Activated CD4-positive, alpha-beta T cell treated with anti-CD3 and anti-CD28 coated beads, Interleukin-2, amount 10 ng/mL, durations not matched to agents 24 days and 14 days (primary cell): ENCODE measurements at regions of chr2 and their contacts with region 1.

Region 1: GRCh38 chr2:38626326-38627035 is 23.8 kb upstream of the HNRNPLL start:
- DNase-seq: peak; percentile 81
- H3K4me3 Mint-ChIP-seq: peak overlapping the region; percentile 7
- H3K27ac Mint-ChIP-seq: peak overlapping the region; percentile 1
- H3K4me1 Mint-ChIP-seq: peaks cover 24% of the 10 kb centered on the region
- H3K27me3 Mint-ChIP-seq: no peaks in the 10 kb centered on the region

Region 2: GRCh38 chr2:38336619-38337018 is 289.9 kb before region 1 on chr2:
- intact Hi-C with region 1: no loop called
- DNase-seq: no peak
- H3K4me3 Mint-ChIP-seq: no peak overlapping the region
- H3K27ac Mint-ChIP-seq: no peak overlapping the region
- H3K4me1 Mint-ChIP-seq: peaks cover 1% of the 10 kb centered on the region
- H3K27me3 Mint-ChIP-seq: no peaks in the 10 kb centered on the region

Region 3: GRCh38 chr2:38610851-38611801 is 15.4 kb before region 1 on chr2:
- intact Hi-C with region 1: loop called (anchors 2 kb)
- DNase-seq: no peak
- H3K4me3 Mint-ChIP-seq: no peak overlapping the region
- H3K27ac Mint-ChIP-seq: no peak overlapping the region
- H3K4me1 Mint-ChIP-seq: peaks cover 42% of the 10 kb centered on the region
- H3K27me3 Mint-ChIP-seq: no peaks in the 10 kb centered on the region

Region 4: DNA sequence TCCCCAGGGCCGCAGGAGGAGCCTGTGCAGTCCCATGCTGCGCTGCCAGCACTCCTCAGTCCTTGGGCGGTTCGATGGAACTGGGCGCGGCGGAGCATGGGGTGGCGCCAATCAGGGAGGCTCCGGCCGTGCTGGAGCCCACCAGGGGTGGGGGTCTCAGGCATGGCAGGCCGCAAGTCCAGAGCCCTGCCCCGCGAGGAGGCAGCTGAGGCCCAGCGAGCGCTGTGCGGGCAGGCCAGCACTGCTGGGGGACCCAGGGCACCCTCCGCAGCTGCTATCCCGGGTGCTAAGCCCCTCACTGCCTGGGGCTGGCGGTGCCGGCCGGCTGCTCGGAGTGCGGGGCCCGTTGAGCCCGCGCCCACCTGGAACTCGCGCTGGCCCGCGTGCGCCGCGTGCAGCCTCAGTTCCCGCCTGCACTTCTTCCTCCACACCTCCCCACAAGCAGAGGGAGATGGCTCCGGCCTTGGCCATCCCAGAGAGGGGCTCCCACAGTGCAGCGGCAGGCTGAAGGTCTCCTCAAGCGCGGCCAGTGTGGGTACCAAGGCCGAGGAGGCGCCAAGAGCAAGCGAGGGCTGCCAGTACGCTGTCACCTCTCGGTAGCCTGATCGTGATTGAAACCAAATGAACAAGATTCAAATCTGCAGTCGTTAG is 16.7 kb after region 1 on chr2:
- intact Hi-C with region 1: loop called (anchors 2 kb)
- DNase-seq: no peak
- H3K4me3 Mint-ChIP-seq: peak overlapping the region; percentile 71
- H3K27ac Mint-ChIP-seq: peak overlapping the region; percentile 90
- H3K4me1 Mint-ChIP-seq: peaks cover 34% of the 10 kb centered on the region
- H3K27me3 Mint-ChIP-seq: no peaks in the 10 kb centered on the region

Region 5: DNA sequence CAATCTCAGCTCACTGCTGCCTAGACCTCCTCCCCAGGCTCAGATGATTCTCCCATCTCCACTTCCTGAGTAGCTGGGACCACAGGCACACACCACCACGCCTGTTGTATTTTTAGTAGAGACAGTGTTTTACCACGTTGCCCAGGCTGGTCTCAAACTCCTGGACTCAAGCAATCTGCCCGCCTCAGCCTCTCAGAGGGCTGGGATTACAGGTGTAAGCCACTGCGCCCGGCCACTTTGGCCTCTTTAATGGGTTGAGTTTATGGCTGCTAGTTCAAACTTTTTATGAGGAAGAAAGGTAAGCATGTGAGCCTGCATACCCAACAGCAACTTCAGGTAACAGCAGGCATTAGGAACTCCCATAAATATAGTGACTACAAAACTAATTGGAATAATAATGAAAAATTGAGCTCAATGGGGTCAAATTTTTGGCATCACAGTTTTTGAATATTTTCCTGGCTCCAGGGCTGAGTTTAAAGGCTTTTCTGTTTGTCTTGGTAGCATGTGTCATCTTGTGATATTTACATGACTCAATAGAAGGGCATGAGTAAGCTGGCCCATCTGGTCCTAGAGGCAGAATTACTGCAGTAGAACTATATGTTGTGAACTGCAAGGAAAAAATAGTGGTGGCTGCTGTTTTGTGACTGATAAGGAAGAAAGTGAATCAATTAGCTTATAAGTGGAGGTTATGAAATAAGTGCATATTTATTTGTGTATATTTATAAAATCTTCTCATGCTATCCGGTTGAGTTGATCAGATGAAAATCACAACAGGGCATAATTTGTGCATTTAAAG is 64.2 kb after region 1 on chr2:
- intact Hi-C with region 1: no loop called
- DNase-seq: no peak
- H3K4me3 Mint-ChIP-seq: no peak overlapping the region
- H3K27ac Mint-ChIP-seq: peak overlapping the region; percentile 86
- H3K4me1 Mint-ChIP-seq: peaks cover 46% of the 10 kb centered on the region
- H3K27me3 Mint-ChIP-seq: no peaks in the 10 kb centered on the region